ENCODE measurements at regions of chr7 and their contacts with region 1.

Region 1: GRCh38 chr7:32347244-32347828 is 142.8 kb downstream of the LSM5 start:
- DNase-seq: peak; percentile 44
- H3K4me3 ChIP-seq: peak overlapping the region in 1 of 2 experiments; percentile 35; a peak in 1 of 4 replicates
- H3K27ac ChIP-seq: no peak overlapping the region
- H3K4me1 ChIP-seq: no peaks in the 10 kb centered on the region
- H3K27me3 ChIP-seq: no peaks in the 10 kb centered on the region
- CTCF ChIP-seq: peak; percentile 98
- EP300 ChIP-seq: no peak
- RAD21 ChIP-seq: peak; percentile 55

Region 2: DNA sequence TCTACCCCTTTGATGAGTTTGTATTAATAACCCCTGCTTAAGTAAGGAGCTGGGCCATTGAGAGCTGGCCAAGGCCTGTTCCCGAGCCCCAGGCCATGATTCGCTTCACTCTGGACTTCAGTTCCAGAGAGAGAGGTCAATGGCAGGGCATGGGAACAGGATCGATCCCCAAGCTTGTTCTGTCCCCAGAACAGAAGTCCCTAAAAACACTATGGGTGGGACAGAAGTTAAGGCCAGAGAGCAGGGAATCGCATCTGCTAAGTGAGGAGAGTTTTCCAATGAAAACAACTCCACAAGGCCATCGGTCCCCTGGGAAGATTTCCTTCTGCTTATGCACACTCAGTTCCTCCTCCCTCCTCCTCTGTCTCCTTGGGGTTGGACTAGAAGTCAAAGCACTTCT is 16.7 kb before region 1 on chr7:
- CTCF ChIA-PET with region 1: interaction called, 14 read pairs
- POLR2A ChIA-PET with region 1: no interaction called
- DNase-seq: no peak
- H3K4me3 ChIP-seq: no peak overlapping the region
- H3K27ac ChIP-seq: no peak overlapping the region
- H3K4me1 ChIP-seq: no peaks in the 10 kb centered on the region
- H3K27me3 ChIP-seq: peaks cover 12% of the 10 kb centered on the region
- CTCF ChIP-seq: no peak
- EP300 ChIP-seq: no peak
- RAD21 ChIP-seq: no peak

Region 3: GRCh38 chr7:32336726-32337125 is 10.6 kb before region 1 on chr7:
- CTCF ChIA-PET with region 1: interaction called, 19 read pairs
- POLR2A ChIA-PET with region 1: no interaction called
- DNase-seq: no peak
- H3K4me3 ChIP-seq: no peak overlapping the region
- H3K27ac ChIP-seq: no peak overlapping the region
- H3K4me1 ChIP-seq: no peaks in the 10 kb centered on the region
- H3K27me3 ChIP-seq: peaks cover 4% of the 10 kb centered on the region; the same call in 1 of the 2 replicates
- CTCF ChIP-seq: no peak
- EP300 ChIP-seq: no peak
- RAD21 ChIP-seq: no peak

Region 4: GRCh38 chr7:32357535-32358277 is 10.4 kb after region 1 on chr7:
- CTCF ChIA-PET with region 1: interaction called, 18 read pairs
- POLR2A ChIA-PET with region 1: interaction called, 3 read pairs
- DNase-seq: no peak
- H3K4me3 ChIP-seq: no peak overlapping the region
- H3K27ac ChIP-seq: no peak overlapping the region
- H3K4me1 ChIP-seq: no peaks in the 10 kb centered on the region
- H3K27me3 ChIP-seq: peaks cover 64% of the 10 kb centered on the region
- CTCF ChIP-seq: no peak
- EP300 ChIP-seq: no peak
- RAD21 ChIP-seq: no peak

Region 5: DNA sequence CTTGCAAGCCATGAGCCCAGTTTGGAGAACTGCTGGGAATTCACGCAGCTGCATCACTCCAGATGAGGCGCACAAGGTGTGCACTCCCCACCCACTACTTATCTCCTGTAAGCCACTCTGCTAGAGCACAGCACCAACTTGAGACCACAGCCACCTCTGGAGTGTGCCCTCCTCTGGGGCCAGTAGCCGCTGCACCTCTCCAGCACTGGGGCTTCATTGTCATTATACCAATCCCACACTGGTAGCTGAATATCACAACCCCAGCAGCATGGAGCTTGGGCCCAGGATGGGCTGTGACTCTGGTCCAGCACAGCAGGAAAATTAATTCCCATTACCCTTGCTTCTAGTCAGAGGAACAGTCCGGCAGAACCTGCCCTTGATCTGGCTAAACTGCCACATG is 17.2 kb after region 1 on chr7:
- CTCF ChIA-PET with region 1: interaction called, 10 read pairs
- POLR2A ChIA-PET with region 1: no interaction called
- DNase-seq: no peak
- H3K4me3 ChIP-seq: no peak overlapping the region
- H3K27ac ChIP-seq: no peak overlapping the region
- H3K4me1 ChIP-seq: no peaks in the 10 kb centered on the region
- H3K27me3 ChIP-seq: peaks cover 28% of the 10 kb centered on the region
- CTCF ChIP-seq: no peak
- EP300 ChIP-seq: no peak
- RAD21 ChIP-seq: no peak

Region 6: DNA sequence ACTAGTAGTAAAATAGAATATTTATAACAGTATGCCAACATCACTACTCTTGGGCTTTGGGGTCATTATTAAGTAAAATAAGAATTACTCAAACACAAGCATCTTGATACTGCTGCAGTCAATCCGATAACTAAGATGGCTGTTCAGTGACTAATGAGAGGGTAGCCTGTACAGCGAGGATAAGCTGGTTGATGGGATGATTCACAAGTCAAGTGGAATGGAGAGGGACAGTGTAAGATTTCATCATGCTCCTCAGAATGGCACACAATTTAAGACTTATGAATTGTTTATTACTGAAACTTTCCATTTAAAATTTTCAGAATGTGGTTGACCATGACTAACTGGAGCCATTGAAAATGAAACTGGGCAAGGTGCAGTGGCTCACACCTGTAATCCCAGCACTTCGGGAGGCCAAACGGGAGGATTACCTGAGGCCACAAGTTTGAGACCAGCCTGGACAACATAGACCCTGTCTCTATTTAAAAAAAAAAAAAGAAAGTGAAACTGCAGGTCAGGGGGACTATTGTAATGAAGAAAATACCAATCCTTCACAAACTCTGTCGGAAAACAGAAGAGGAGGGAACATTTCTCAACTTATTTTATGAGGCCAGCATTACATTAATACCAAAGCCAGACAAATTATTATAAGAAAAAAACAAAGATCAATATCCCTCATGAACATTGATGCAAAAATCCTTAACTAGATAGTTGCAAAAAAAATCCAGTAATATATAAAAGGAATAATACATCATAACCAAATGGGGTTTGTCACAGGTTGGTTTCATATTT is 159.1 kb after region 1 on chr7:
- CTCF ChIA-PET with region 1: no interaction called
- POLR2A ChIA-PET with region 1: no interaction called
- DNase-seq: no peak
- H3K4me3 ChIP-seq: peak overlapping the region in 1 of 2 experiments; percentile 27; a peak in 1 of 4 replicates
- H3K27ac ChIP-seq: peak overlapping the region in 1 of 2 experiments; percentile 52; a peak in 2 of 4 replicates
- H3K4me1 ChIP-seq: peaks cover 0 to 7% of the 10 kb centered on the region in 2 experiments; a peak in 3 of 4 replicates
- H3K27me3 ChIP-seq: no peaks in the 10 kb centered on the region
- CTCF ChIP-seq: no peak
- EP300 ChIP-seq: no peak
- RAD21 ChIP-seq: no peak

Measured in SK-N-SH (cell line).